Calu3 (cell line): ENCODE measurements at regions of chr11 and their contacts with region 1.

Region 1: GRCh38 chr11:85941380-85941973 is 86.3 kb downstream of the CCDC83 start:
- DNase-seq: peak; percentile 50
- H3K4me3 Mint-ChIP-seq: no peak overlapping the region
- H3K27ac Mint-ChIP-seq: no peak overlapping the region
- H3K4me1 Mint-ChIP-seq: peaks cover 12% of the 10 kb centered on the region
- H3K27me3 Mint-ChIP-seq: no peaks in the 10 kb centered on the region
- CTCF ChIP-seq: peak; percentile 69

Region 2: GRCh38 chr11:85965202-85965601 is 23.7 kb after region 1 on chr11:
- CTCF ChIA-PET with region 1: no interaction called
- intact Hi-C with region 1: no loop called
- DNase-seq: no peak
- H3K4me3 Mint-ChIP-seq: no peak overlapping the region
- H3K27ac Mint-ChIP-seq: no peak overlapping the region
- H3K4me1 Mint-ChIP-seq: no peaks in the 10 kb centered on the region
- H3K27me3 Mint-ChIP-seq: no peaks in the 10 kb centered on the region
- CTCF ChIP-seq: no peak

Region 3: DNA sequence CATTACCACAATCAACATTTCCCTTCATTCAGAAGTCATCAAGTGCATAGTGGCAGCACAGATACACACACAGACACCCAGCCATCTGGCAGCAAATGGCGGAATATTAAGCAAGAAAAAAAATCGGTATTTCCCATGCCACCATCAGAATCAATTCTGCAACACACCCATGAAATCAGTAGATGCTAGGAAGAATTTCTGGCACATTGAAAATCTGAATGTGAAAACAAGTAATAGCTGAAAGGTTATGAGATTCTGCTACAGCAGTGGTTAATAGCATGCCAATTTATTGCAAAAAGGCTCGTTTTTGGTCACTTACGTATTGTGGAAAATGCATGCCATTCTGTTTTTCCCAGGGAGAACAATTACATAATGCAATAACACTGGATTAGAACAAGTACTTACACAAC is 36.3 kb after region 1 on chr11:
- CTCF ChIA-PET with region 1: no interaction called
- intact Hi-C with region 1: no loop called
- DNase-seq: no peak
- H3K4me3 Mint-ChIP-seq: no peak overlapping the region
- H3K27ac Mint-ChIP-seq: no peak overlapping the region
- H3K4me1 Mint-ChIP-seq: no peaks in the 10 kb centered on the region
- H3K27me3 Mint-ChIP-seq: no peaks in the 10 kb centered on the region
- CTCF ChIP-seq: no peak

Region 4: GRCh38 chr11:86218125-86219084 is 276.9 kb after region 1 on chr11:
- CTCF ChIA-PET with region 1: interaction called, 3 read pairs
- intact Hi-C with region 1: loop called (anchors 2 kb)
- DNase-seq: peak; percentile 72
- H3K4me3 Mint-ChIP-seq: peak overlapping the region; percentile 7
- H3K27ac Mint-ChIP-seq: peak overlapping the region; percentile 9
- H3K4me1 Mint-ChIP-seq: peaks cover 22% of the 10 kb centered on the region
- H3K27me3 Mint-ChIP-seq: no peaks in the 10 kb centered on the region
- CTCF ChIP-seq: peak; percentile 53

Region 5: GRCh38 chr11:86291466-86292262 is 350.2 kb after region 1 on chr11:
- CTCF ChIA-PET with region 1: no interaction called
- intact Hi-C with region 1: loop called (anchors 2 kb)
- DNase-seq: peak; percentile 62
- H3K4me3 Mint-ChIP-seq: no peak overlapping the region
- H3K27ac Mint-ChIP-seq: no peak overlapping the region
- H3K4me1 Mint-ChIP-seq: no peaks in the 10 kb centered on the region
- H3K27me3 Mint-ChIP-seq: peaks cover 11% of the 10 kb centered on the region
- CTCF ChIP-seq: peak; percentile 68